Endothelial cell of umbilical vein (primary cell): ENCODE measurements at regions of chr17 and their contacts with region 1.

Region 1: DNA sequence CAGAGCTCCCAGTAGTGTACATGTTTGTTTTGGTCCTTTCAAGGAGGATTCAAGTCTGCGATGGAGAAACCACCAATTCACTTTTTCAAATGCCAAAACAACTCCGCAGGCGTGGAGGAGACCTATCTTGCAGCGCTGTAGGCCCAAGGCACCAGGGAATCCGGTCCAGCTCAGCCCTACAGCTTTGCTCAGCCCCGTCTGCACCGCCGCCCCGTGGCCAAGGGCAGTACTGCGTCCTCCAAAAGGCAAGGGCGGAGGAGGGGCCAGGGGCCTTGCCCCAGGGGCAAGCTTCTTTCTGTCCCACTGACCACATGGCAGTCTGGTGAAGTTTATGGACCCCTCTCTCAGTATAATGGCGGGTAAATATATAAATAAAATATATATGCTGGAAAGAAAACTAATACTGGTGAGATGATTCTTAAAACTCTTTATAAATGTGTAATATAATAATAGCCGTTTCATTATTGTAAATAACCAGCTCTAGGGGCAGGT is 709 bp upstream of the CD300LG start:
- DNase-seq: peak; percentile 74
- H3K4me3 ChIP-seq: no peak overlapping the region
- H3K27ac ChIP-seq: no peak overlapping the region
- H3K4me1 ChIP-seq: no peaks in the 10 kb centered on the region
- H3K27me3 ChIP-seq: peaks cover 2 to 3% of the 10 kb centered on the region in 2 experiments
- CTCF ChIP-seq: peak; percentile 95 to 99
- POLR2A ChIP-seq: no peak

Region 2: DNA sequence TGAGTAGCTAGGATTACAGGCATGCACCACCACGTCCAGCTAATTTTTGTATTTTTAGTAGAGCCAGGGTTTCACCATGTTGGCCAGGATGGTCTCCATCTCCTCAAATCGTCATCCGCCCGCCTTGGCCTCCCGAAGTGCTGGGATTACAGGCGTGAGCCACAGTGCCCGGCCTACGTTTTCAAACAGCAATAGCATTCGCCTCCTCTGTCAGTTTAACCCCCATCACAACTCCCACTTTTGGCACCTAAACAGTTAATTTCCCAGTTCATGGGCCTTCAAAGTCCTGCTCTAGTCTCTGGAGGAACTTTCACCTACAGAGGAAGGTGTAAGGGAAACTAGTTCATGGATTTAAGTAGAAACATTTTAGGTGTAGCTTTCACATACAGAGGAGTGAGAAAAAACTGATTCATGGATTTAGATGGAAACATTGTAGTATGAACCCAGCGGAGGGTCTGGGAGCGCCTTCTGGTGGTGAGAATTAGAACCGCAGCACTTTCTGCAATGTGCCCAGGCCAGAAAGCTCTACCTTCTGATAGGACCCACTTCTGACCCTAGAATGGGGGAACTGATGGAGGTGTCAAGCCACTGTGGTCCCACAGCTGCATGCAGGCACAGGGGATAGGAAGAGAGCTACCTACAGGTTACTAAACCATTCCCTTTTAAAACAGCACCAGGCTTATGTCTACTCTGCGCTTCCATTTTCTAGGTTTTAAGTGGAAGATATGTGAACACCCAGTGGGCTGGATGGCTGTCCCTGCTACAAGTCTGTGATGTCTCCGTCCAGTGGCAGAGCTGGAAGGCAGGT is 172.5 kb before region 1 on chr17:
- CTCF ChIA-PET with region 1: no interaction called
- POLR2A ChIA-PET with region 1: no interaction called
- dilution Hi-C with region 1: no loop called
- intact Hi-C with region 1: no loop called
- DNase-seq: peak; percentile 79
- H3K4me3 ChIP-seq: no peak overlapping the region
- H3K27ac ChIP-seq: no peak overlapping the region
- H3K4me1 ChIP-seq: no peaks in the 10 kb centered on the region
- H3K27me3 ChIP-seq: no peaks in the 10 kb centered on the region
- CTCF ChIP-seq: peak; percentile 89 to 97
- POLR2A ChIP-seq: no peak

Region 3: DNA sequence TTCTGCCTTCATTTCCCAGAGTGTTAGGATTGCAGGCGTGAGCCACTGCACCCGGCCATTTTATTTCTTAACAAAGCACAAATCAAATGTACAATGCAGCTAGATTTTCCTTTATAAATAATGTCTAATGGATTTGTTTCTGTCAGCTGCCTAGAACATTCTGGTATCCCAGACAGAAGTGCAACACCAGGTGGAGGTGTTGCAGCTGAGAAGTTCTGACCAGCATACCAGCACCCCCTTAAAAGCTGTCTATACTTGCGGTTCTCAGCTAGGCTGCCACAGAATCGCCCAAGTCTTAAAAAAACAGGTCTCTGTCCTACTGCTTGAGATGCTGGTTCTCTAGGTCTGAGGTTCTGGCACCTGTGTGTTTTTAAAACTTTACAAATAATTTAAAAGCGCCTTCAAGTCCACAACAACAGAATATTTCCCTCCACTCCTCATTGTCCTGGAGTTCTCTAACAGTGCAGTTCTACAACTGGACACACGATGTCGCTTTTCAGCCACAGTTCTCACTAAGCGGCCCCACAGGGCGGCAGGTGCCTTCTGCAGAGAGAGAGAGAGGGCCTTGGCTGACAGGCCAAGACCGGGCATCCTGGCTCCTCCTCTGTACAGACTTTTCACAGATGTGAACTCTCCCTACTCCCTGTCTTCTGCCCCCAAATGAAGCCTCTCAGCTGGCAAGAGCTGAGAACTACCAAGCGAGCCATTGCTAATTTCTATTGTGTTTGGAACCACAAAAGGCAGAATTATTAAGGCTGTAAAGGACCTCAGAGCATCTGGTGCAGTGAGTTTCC is 152.0 kb before region 1 on chr17:
- CTCF ChIA-PET with region 1: interaction called, 8 read pairs
- POLR2A ChIA-PET with region 1: no interaction called
- dilution Hi-C with region 1: no loop called
- intact Hi-C with region 1: loop called (anchors 2 kb)
- DNase-seq: peak; percentile 76
- H3K4me3 ChIP-seq: no peak overlapping the region
- H3K27ac ChIP-seq: no peak overlapping the region
- H3K4me1 ChIP-seq: no peaks in the 10 kb centered on the region
- H3K27me3 ChIP-seq: no peaks in the 10 kb centered on the region
- CTCF ChIP-seq: peak; percentile 83 to 84
- POLR2A ChIP-seq: no peak

Region 4: DNA sequence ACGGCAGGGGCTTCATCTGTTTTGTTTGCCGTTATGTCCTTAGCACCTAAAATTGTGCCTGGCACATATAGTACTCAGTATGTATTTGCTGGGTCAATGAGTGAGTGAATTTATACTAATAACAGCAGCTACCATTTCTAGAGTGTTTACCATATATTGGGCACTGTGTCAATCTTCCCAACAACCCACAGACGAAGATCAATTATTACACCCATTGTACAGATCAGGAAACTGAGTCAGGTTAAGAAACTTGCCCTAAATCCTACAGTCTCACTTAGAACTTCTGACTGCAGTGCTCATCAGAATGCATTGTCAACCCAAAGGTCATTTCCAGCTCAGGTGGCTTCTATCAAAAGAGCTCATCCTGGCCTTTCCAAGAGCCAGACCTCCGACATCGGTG is 140.0 kb before region 1 on chr17:
- CTCF ChIA-PET with region 1: no interaction called
- POLR2A ChIA-PET with region 1: no interaction called
- dilution Hi-C with region 1: no loop called
- intact Hi-C with region 1: no loop called
- DNase-seq: no peak
- H3K4me3 ChIP-seq: no peak overlapping the region
- H3K27ac ChIP-seq: no peak overlapping the region
- H3K4me1 ChIP-seq: no peaks in the 10 kb centered on the region
- H3K27me3 ChIP-seq: no peaks in the 10 kb centered on the region
- CTCF ChIP-seq: no peak
- POLR2A ChIP-seq: no peak

Region 5: GRCh38 chr17:43766413-43767052 is 79.7 kb before region 1 on chr17:
- CTCF ChIA-PET with region 1: interaction called, 46 read pairs
- POLR2A ChIA-PET with region 1: no interaction called
- dilution Hi-C with region 1: no loop called
- intact Hi-C with region 1: no loop called
- DNase-seq: peak; percentile 56
- H3K4me3 ChIP-seq: no peak overlapping the region
- H3K27ac ChIP-seq: no peak overlapping the region
- H3K4me1 ChIP-seq: peaks cover 2% of the 10 kb centered on the region
- H3K27me3 ChIP-seq: no peaks in the 10 kb centered on the region
- CTCF ChIP-seq: peak; percentile 84 to 93
- POLR2A ChIP-seq: no peak

Region 6: DNA sequence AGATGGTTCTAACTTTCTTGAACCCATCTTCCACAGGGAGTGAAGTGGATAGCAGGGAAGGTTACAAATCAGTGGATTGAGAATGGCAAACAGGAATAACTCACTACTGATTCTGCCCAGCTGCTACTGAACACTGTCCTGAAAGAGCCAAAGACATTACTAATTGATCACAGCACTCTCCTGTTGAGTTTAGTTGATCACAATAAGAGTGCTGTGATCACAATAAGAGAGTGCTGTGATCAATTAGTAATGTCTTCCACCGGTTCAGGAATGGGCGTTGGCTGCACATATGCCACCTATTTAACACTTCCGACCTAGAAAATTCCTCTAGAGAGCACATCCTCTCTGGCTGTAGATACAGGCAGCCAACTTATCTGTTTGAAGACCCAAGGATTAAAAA is 54.7 kb before region 1 on chr17:
- CTCF ChIA-PET with region 1: interaction called, 153 read pairs
- POLR2A ChIA-PET with region 1: no interaction called
- dilution Hi-C with region 1: no loop called
- intact Hi-C with region 1: loop called (anchors 1 kb)
- DNase-seq: peak; percentile 40
- H3K4me3 ChIP-seq: no peak overlapping the region
- H3K27ac ChIP-seq: no peak overlapping the region
- H3K4me1 ChIP-seq: no peaks in the 10 kb centered on the region
- H3K27me3 ChIP-seq: peaks cover 0 to 1% of the 10 kb centered on the region in 2 experiments
- CTCF ChIP-seq: no peak
- POLR2A ChIP-seq: no peak

Region 7: DNA sequence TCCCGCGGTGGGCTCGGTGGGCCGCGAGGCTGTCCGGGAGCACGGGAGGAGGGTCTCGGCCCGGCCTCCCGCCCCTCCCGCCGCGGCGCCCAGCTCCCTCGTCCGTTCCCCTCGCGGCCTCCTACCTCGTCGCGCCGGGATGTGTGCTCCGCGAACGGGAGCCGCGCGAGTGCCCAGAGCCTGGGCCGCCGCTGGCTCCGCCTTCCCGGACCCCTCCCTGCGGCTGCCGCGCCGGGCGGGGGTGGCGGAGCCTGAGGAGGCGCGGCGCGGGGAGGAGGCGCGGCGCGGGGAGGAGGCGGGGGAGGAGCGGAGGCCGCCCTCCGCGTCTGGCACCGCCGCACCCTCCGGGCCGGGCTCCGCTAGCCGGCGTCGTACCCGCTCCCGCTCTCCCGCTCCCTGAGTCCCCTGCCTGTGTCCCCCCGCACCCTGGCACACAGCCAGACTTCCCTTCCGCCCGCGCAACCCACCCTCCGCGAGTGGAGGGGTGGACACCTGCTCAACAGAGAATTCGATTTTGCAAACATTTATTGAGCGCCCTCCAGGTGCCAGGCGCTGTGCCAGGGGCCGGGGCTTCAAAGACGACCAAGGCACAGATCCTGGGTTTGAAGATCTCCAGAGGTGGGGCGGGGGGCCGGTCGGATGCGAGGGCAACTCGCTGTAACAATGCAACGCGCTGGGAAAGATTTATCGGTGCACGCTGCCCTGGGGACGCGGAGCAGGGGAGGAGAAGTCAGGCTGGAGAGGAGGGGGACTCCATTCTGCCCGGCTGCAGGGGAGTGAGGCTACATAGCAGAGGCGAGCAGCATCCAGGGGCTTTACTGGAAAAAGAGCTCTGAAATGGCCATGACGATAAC is 13.1 kb before region 1 on chr17 and contains the start of gene MPP3:
- CTCF ChIA-PET with region 1: interaction called, 28 read pairs
- POLR2A ChIA-PET with region 1: no interaction called
- dilution Hi-C with region 1: no loop called
- intact Hi-C with region 1: no loop called
- DNase-seq: peak; percentile 66
- H3K4me3 ChIP-seq: peak within 1 kb of the TSS; percentile 33 to 85 (median 47)
- H3K27ac ChIP-seq: no peak within 1 kb of the TSS
- H3K4me1 ChIP-seq: peaks cover 2% of the 10 kb centered on the region
- H3K27me3 ChIP-seq: no peaks in the 10 kb centered on the region
- CTCF ChIP-seq: no peak
- POLR2A ChIP-seq: peak; percentile 69
- total RNA-seq, gene MPP3: 10.8 and 11.3 TPM in 2 replicates

Region 8: GRCh38 chr17:43878260-43879175 is 32.3 kb after region 1 on chr17:
- CTCF ChIA-PET with region 1: interaction called, 13 read pairs
- POLR2A ChIA-PET with region 1: no interaction called
- dilution Hi-C with region 1: no loop called
- intact Hi-C with region 1: no loop called
- DNase-seq: peak; percentile 71
- H3K4me3 ChIP-seq: no peak overlapping the region
- H3K27ac ChIP-seq: no peak overlapping the region
- H3K4me1 ChIP-seq: no peaks in the 10 kb centered on the region
- H3K27me3 ChIP-seq: peaks cover 3 to 4% of the 10 kb centered on the region in 2 experiments
- CTCF ChIP-seq: peak; percentile 93 to 100
- POLR2A ChIP-seq: no peak

Region 9: GRCh38 chr17:43952717-43953666 is 106.7 kb after region 1 on chr17:
- CTCF ChIA-PET with region 1: no interaction called
- POLR2A ChIA-PET with region 1: no interaction called
- dilution Hi-C with region 1: no loop called
- intact Hi-C with region 1: no loop called
- DNase-seq: no peak
- H3K4me3 ChIP-seq: no peak overlapping the region
- H3K27ac ChIP-seq: no peak overlapping the region
- H3K4me1 ChIP-seq: peaks cover 2% of the 10 kb centered on the region
- H3K27me3 ChIP-seq: peaks cover 40 to 44% of the 10 kb centered on the region in 2 experiments
- CTCF ChIP-seq: no peak
- POLR2A ChIP-seq: no peak